ENCODE measurements at regions of chr14 and their contacts with region 1.

Region 1: GRCh38 chr14:22099942-22100763 is 426.5 kb upstream of the OR4E1 start:
- DNase-seq: peak; percentile 21 to 81 (median 54)
- ATAC-seq: peak; percentile 70
- H3K4me3 ChIP-seq: no peak overlapping the region
- H3K4me3 Mint-ChIP-seq: no peak overlapping the region
- H3K27ac ChIP-seq: no peak overlapping the region
- H3K27ac Mint-ChIP-seq: no peak overlapping the region
- H3K4me1 ChIP-seq: peaks cover 34% of the 10 kb centered on the region
- H3K4me1 Mint-ChIP-seq: peaks cover 56% of the 10 kb centered on the region
- H3K27me3 ChIP-seq: no peaks in the 10 kb centered on the region
- H3K27me3 Mint-ChIP-seq: no peaks in the 10 kb centered on the region
- CTCF ChIP-seq: peak; percentile 48

Region 2: DNA sequence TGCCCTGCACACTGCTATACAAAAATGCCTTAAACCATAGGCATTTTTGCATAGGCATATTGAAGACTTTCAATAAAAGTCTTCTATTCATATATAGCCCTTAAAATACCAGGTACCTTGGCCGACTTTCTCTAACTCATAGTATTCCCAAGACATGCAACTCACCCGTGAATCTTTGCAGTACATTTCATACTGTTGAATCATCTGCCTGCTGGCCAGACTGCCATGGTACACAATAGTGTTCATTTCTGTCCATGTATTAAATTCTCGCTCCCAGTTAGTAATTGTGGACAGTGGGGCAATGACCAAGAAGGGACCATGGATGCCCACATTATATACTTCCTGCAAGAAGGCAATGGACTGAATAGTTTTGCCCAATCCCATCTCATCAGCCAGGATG is 692.0 kb before region 1 on chr14:
- CTCF ChIA-PET with region 1: no interaction called
- POLR2A ChIA-PET with region 1: no interaction called
- intact Hi-C with region 1: no loop called
- DNase-seq: no peak
- ATAC-seq: no peak
- H3K4me3 ChIP-seq: no peak overlapping the region
- H3K4me3 Mint-ChIP-seq: no peak overlapping the region
- H3K27ac ChIP-seq: no peak overlapping the region
- H3K27ac Mint-ChIP-seq: no peak overlapping the region
- H3K4me1 ChIP-seq: no peaks in the 10 kb centered on the region
- H3K4me1 Mint-ChIP-seq: no peaks in the 10 kb centered on the region
- H3K27me3 ChIP-seq: no peaks in the 10 kb centered on the region
- H3K27me3 Mint-ChIP-seq: no peaks in the 10 kb centered on the region
- CTCF ChIP-seq: no peak

Region 3: GRCh38 chr14:22002860-22003309 is 97.3 kb before region 1 on chr14:
- CTCF ChIA-PET with region 1: no interaction called
- POLR2A ChIA-PET with region 1: interaction called, 3 read pairs
- intact Hi-C with region 1: loop called (anchors 2 to 5 kb)
- DNase-seq: peak; percentile 39 to 84 (median 70)
- ATAC-seq: peak; percentile 76
- H3K4me3 ChIP-seq: peak overlapping the region; percentile 17 to 28
- H3K4me3 Mint-ChIP-seq: peak overlapping the region; percentile 67
- H3K27ac ChIP-seq: peak overlapping the region; percentile 50 to 67
- H3K27ac Mint-ChIP-seq: peak overlapping the region; percentile 93
- H3K4me1 ChIP-seq: peaks cover 20% of the 10 kb centered on the region
- H3K4me1 Mint-ChIP-seq: peaks cover 28% of the 10 kb centered on the region
- H3K27me3 ChIP-seq: no peaks in the 10 kb centered on the region
- H3K27me3 Mint-ChIP-seq: no peaks in the 10 kb centered on the region
- CTCF ChIP-seq: peak; percentile 32

Region 4: DNA sequence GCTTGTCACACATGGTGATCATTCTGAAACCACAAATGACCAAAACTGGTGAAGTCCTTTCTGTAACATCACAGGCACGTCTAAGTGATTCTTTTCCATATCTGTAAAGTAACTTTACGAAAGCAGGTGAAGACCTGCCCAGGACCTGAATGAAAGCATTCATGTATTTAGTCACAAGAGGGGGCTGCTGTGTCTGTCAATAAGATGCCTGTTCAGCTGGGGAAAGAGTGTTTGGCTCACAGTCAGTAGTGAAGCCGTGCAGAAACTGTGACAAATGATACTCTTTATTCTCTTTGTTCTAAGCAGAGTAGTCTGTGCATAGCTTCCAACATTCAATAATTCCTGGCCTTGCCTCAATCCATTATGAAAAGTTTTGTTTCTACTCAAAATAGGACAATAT is 53.0 kb before region 1 on chr14:
- CTCF ChIA-PET with region 1: interaction called, 22 read pairs
- POLR2A ChIA-PET with region 1: no interaction called
- intact Hi-C with region 1: loop called (anchors 1 kb)
- DNase-seq: peak in 5 of 9 experiments; percentile 19 to 77 (median 38)
- ATAC-seq: peak; percentile 90
- H3K4me3 ChIP-seq: no peak overlapping the region
- H3K4me3 Mint-ChIP-seq: peak overlapping the region; percentile 58
- H3K27ac ChIP-seq: peak overlapping the region; percentile 15 to 19
- H3K27ac Mint-ChIP-seq: peak overlapping the region; percentile 92
- H3K4me1 ChIP-seq: peaks cover 14% of the 10 kb centered on the region
- H3K4me1 Mint-ChIP-seq: peaks cover 44% of the 10 kb centered on the region
- H3K27me3 ChIP-seq: no peaks in the 10 kb centered on the region
- H3K27me3 Mint-ChIP-seq: no peaks in the 10 kb centered on the region
- CTCF ChIP-seq: peak; percentile 35

Region 5: GRCh38 chr14:22070119-22071011 is 29.8 kb before region 1 on chr14:
- CTCF ChIA-PET with region 1: interaction called, 15 read pairs
- POLR2A ChIA-PET with region 1: interaction called, 9 read pairs
- intact Hi-C with region 1: loop called (anchors 2 to 5 kb)
- DNase-seq: peak in 8 of 9 experiments; percentile 24 to 77 (median 60)
- ATAC-seq: peak; percentile 78
- H3K4me3 ChIP-seq: peak overlapping the region; percentile 49 to 69
- H3K4me3 Mint-ChIP-seq: peak overlapping the region; percentile 90
- H3K27ac ChIP-seq: peak overlapping the region; percentile 44 to 57
- H3K27ac Mint-ChIP-seq: peak overlapping the region; percentile 94
- H3K4me1 ChIP-seq: peaks cover 26% of the 10 kb centered on the region
- H3K4me1 Mint-ChIP-seq: peaks cover 51% of the 10 kb centered on the region
- H3K27me3 ChIP-seq: no peaks in the 10 kb centered on the region
- H3K27me3 Mint-ChIP-seq: no peaks in the 10 kb centered on the region
- CTCF ChIP-seq: no peak

Region 6: DNA sequence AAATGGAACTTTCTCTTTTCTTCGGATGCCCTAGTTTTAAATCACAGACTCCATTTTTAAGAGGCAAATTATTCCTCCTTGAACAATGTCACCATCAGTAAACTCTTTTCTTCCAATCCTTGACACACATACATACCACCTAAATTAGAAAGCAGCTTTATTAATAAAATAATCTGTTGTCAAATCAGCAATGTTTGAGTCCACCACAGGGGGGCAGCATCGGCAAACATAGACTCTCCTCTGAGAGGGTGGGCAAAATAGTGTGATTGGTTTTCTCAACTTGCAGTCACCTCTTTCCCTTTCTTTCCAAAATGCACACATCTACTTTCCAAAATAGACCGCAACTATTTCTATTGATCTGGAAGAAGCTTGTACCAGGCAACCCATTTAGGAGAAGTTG is 11.9 kb after region 1 on chr14:
- CTCF ChIA-PET with region 1: interaction called, 15 read pairs
- POLR2A ChIA-PET with region 1: interaction called, 3 read pairs
- intact Hi-C with region 1: no loop called
- DNase-seq: peak in 8 of 9 experiments; percentile 8 to 61 (median 50)
- ATAC-seq: peak; percentile 36
- H3K4me3 ChIP-seq: peak overlapping the region; percentile 31 to 37
- H3K4me3 Mint-ChIP-seq: peak overlapping the region; percentile 80
- H3K27ac ChIP-seq: no peak overlapping the region
- H3K27ac Mint-ChIP-seq: peak overlapping the region; percentile 88
- H3K4me1 ChIP-seq: no peaks in the 10 kb centered on the region
- H3K4me1 Mint-ChIP-seq: peaks cover 28% of the 10 kb centered on the region
- H3K27me3 ChIP-seq: peaks cover 0 to 2% of the 10 kb centered on the region in 2 experiments
- H3K27me3 Mint-ChIP-seq: no peaks in the 10 kb centered on the region
- CTCF ChIP-seq: peak; percentile 34

Region 7: DNA sequence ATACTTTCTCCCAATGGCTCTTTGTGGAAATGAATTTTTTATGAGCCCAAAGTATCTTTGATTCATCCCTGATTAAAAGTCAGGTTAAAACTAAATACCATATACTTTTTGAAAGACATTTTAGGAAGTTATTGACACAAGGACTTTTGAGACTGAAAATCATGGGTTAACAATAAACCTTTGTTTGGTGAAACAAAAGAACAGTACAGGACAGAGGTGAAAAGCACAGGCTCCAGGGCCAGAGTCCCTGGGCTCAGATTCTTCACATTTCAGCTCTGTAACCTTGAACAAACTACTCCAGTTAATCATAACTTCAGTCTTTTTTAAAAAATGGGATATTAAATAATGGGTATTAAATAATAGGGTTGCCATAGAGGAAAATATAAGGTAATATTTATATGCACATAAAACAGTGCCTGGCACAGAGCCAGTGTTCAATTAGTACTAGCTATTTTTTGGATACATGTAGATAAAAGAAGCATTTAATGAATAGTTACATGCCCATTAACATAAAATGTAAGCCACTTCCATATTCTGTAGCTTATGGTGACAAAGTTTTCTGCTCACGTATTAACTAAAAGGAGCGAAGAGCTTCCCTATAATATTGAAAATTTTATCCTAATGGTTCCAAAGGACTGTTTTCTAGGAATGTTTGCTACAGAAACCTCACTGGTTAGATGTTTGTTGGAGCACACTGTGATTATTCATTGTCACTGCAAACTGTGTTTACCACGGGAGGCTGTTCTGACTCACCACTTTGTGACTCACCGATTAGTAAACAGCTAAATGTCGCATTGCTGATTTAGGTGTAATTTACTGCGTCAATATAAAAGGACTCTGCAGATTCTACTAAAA is 233.5 kb after region 1 on chr14:
- CTCF ChIA-PET with region 1: no interaction called
- POLR2A ChIA-PET with region 1: no interaction called
- intact Hi-C with region 1: no loop called
- DNase-seq: peak in 2 of 9 experiments; percentile 2 to 3
- ATAC-seq: no peak
- H3K4me3 ChIP-seq: no peak overlapping the region
- H3K4me3 Mint-ChIP-seq: no peak overlapping the region
- H3K27ac ChIP-seq: no peak overlapping the region
- H3K27ac Mint-ChIP-seq: no peak overlapping the region
- H3K4me1 ChIP-seq: no peaks in the 10 kb centered on the region
- H3K4me1 Mint-ChIP-seq: no peaks in the 10 kb centered on the region
- H3K27me3 ChIP-seq: no peaks in the 10 kb centered on the region
- H3K27me3 Mint-ChIP-seq: no peaks in the 10 kb centered on the region
- CTCF ChIP-seq: no peak

Region 8: GRCh38 chr14:22994762-22995275 is 894.7 kb after region 1 on chr14:
- CTCF ChIA-PET with region 1: no interaction called
- POLR2A ChIA-PET with region 1: no interaction called
- intact Hi-C with region 1: no loop called
- DNase-seq: peak in 7 of 9 experiments; percentile 13 to 63 (median 46)
- ATAC-seq: peak; percentile 85
- H3K4me3 ChIP-seq: no peak overlapping the region
- H3K4me3 Mint-ChIP-seq: no peak overlapping the region
- H3K27ac ChIP-seq: no peak overlapping the region
- H3K27ac Mint-ChIP-seq: no peak overlapping the region
- H3K4me1 ChIP-seq: peaks cover 3% of the 10 kb centered on the region
- H3K4me1 Mint-ChIP-seq: peaks cover 5% of the 10 kb centered on the region
- H3K27me3 ChIP-seq: no peaks in the 10 kb centered on the region
- H3K27me3 Mint-ChIP-seq: no peaks in the 10 kb centered on the region
- CTCF ChIP-seq: peak; percentile 46

Measured in CD8-positive, alpha-beta T cell (primary cell).